ENCODE measurements at regions of chr5 and their contacts with region 1.

Region 1: DNA sequence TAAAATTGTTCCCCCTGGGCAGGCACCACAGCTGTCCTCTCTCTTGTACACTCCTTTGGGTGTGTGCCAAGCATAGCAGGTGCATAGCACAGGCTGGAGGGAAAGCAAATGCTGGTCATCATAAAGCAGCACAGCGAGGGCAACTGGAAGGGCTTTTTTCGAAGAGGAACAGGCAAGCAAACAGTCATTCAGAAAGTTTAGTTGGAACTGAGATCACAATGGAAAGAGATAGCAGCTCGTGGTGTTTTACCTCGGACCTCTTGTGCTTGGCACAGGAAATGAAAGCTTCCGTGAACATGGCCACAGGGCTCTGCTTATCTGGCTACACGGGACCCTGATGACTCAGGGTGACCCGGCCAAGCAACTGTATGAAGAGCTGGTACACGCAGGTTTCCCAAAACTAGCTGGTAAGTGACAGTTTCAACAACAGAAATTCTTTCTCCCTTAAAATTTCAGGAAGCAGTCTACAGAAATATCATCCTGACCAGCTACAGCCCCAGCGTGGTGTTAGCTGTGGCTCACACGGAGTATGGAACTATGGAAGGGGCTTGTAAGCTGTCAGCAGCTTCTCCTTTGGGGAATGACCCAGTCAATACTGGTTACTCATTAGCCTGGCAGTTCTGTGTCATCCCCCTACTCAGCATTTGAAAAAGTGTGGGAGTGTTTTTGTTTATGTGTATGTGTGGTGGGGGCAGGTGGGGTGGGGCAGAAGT is 48.1 kb downstream of the POC5 start:
- DNase-seq: peak; percentile 37
- H3K4me3 Mint-ChIP-seq: peak overlapping the region; percentile 79
- H3K27ac Mint-ChIP-seq: peak overlapping the region; percentile 91
- H3K4me1 Mint-ChIP-seq: peaks cover 36% of the 10 kb centered on the region
- H3K27me3 Mint-ChIP-seq: peaks cover 3% of the 10 kb centered on the region

Region 2: GRCh38 chr5:74945561-74946165 is 723.5 kb before region 1 on chr5:
- intact Hi-C with region 1: loop called (anchors 10 kb)
- DNase-seq: peak; percentile 11
- H3K4me3 Mint-ChIP-seq: no peak overlapping the region
- H3K27ac Mint-ChIP-seq: peak overlapping the region; percentile 20
- H3K4me1 Mint-ChIP-seq: peaks cover 11% of the 10 kb centered on the region
- H3K27me3 Mint-ChIP-seq: peaks cover 33% of the 10 kb centered on the region

Region 3: DNA sequence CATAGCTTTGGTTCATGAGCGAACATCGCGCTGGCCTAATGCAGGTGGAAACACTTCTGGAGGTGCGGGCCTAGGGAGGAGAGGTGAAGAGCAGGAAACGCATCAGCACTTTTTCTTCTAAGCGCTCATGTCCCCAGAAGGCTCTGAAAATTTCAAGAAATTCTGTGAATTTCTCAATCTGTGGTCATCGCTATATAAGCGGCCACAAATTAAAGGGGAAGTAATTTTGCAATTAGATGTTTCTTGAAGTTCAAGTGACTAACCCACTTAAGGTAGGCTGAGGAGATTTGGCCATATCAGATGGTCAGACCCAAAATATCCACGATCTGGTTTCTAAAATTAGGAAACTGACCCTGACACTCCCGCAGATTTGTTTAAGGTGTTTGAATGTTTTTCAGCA is 348.8 kb before region 1 on chr5:
- intact Hi-C with region 1: loop called (anchors 1 kb)
- DNase-seq: no peak
- H3K4me3 Mint-ChIP-seq: no peak overlapping the region
- H3K27ac Mint-ChIP-seq: no peak overlapping the region
- H3K4me1 Mint-ChIP-seq: peaks cover 13% of the 10 kb centered on the region
- H3K27me3 Mint-ChIP-seq: peaks cover 2% of the 10 kb centered on the region

Region 4: DNA sequence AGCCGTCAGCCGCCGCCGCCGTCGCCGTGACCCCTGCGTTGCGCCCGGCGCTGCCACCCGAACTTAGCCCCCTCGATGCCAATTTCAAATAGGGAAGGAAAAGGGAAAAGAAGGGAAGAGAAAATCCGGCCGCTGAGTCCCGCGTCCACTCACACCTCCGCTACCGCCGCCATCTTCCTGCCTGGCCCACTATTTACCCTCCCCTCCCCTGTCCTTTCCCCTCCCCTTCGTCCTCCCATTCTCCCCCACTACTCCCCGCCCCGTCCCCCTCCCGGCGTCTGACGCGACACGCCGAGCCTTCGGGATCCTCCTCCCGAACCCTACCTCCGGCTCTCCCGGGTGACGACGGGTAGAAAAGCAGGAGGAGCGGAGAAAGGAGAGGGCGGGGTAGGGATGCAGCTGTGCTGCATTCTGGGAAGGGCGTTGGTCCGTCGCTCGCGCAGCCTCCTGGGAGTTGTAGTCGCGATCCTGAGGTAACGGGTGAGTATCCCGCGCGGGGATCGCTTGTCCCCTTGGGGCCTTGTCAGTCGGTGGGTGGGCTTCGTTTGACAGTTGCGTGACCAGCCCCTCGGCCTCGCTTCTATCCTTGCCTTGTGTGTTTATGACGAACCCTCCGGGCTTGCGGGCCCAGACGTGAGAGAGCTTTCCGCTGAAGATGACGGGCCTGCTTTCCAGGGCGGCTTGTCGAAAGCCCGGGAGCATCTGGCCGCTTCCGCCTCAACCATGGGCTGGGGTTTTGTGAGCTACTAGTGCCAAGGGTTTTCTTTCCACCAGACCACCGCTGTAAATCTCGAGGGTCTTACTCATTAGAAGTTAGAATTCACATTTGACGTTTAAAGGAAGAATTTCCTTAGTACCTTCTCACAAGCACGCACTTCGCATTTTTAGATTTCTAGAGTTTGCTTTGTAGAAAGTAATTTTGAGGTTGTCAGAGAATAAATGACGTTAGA is 157.4 kb before region 1 on chr5 and contains the starts of genes CERT1 and POLK:
- intact Hi-C with region 1: loop called (anchors 1 kb)
- DNase-seq: peak; percentile 96
- H3K4me3 Mint-ChIP-seq: peak within 1 kb of the TSS; percentile 99
- H3K27ac Mint-ChIP-seq: peak within 1 kb of the TSS; percentile 93
- H3K4me1 Mint-ChIP-seq: peaks cover 62% of the 10 kb centered on the region
- H3K27me3 Mint-ChIP-seq: no peaks in the 10 kb centered on the region
- total RNA-seq, gene CERT1: 41.0 and 43.4 TPM in 2 replicates
- total RNA-seq, gene POLK: 38.0 and 40.4 TPM in 2 replicates

Region 5: DNA sequence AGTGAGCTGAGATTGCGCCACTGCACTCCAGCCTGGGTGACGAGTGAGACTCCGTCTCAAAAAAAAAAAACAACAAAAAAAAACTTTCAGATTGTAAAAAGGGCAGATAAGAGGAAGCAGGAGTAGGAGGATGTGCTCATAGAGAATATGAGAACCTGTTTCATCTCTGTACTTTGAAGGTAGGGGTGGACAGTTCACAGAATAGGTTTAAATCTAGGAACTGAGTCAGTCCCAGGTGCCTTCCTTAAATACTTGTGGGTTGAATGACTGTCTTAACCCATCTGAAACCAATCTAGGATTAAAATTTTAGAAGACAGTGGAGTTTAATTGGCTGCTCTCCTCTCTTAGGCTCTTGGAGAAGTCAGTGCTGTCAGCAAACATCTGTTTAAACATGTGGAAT is 145.1 kb before region 1 on chr5:
- intact Hi-C with region 1: loop called (anchors 1 kb)
- DNase-seq: no peak
- H3K4me3 Mint-ChIP-seq: peak overlapping the region; percentile 49
- H3K27ac Mint-ChIP-seq: peak overlapping the region; percentile 74
- H3K4me1 Mint-ChIP-seq: peaks cover 51% of the 10 kb centered on the region
- H3K27me3 Mint-ChIP-seq: no peaks in the 10 kb centered on the region

Region 6: GRCh38 chr5:75584641-75585040 is 84.5 kb before region 1 on chr5:
- intact Hi-C with region 1: no loop called
- DNase-seq: no peak
- H3K4me3 Mint-ChIP-seq: no peak overlapping the region
- H3K27ac Mint-ChIP-seq: no peak overlapping the region
- H3K4me1 Mint-ChIP-seq: peaks cover 5% of the 10 kb centered on the region
- H3K27me3 Mint-ChIP-seq: no peaks in the 10 kb centered on the region

Region 7: GRCh38 chr5:75681125-75681830 is 12.1 kb after region 1 on chr5:
- intact Hi-C with region 1: loop called (anchors 1 kb)
- DNase-seq: no peak
- H3K4me3 Mint-ChIP-seq: no peak overlapping the region
- H3K27ac Mint-ChIP-seq: no peak overlapping the region
- H3K4me1 Mint-ChIP-seq: peaks cover 11% of the 10 kb centered on the region
- H3K27me3 Mint-ChIP-seq: no peaks in the 10 kb centered on the region

Region 8: DNA sequence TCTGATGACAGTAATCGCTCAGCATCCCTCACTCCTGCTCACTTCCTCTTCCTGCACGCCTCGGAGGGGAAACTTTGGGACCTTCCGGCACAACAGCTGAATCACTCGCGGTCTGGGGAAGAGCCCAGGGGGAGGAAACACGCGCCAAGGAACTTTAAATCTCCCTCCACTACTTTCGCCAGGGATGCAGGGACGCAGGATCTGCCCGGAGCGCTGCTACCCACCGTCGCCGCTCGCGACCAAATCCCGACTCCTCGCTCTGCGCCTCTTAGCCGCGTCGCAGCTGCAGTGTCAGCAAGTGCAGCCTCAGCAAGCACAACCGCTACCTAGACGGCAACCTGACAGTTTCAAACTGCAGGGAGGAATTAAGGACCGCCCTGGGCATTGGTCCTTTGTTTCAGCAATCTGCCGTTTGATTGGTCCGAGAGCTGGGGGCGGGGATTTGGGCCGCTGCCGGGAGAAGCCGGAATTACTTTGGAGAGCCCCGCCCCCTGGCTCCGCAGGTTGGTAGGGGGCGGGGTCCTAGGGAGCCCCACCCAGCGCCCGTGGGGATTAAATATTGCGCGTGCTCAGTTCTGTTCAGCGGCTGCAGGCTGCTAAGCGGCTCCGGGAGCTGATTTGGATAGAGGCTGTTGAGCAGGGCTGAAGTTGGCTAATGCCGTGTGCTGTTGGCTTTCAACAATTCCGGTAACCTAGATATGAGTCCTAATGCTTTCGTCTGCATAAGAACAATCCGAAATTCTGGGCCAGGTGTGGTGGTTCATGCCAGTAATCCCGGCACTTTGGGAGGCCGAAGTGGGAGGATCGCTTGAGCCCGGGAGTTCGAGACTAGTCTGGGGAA is 48.2 kb after region 1 on chr5 and contains the start of gene POC5:
- intact Hi-C with region 1: loop called (anchors 1 kb)
- DNase-seq: peak; percentile 98
- H3K4me3 Mint-ChIP-seq: peak within 1 kb of the TSS; percentile 98
- H3K27ac Mint-ChIP-seq: peak within 1 kb of the TSS; percentile 100
- H3K4me1 Mint-ChIP-seq: peaks cover 34% of the 10 kb centered on the region
- H3K27me3 Mint-ChIP-seq: peaks cover 3% of the 10 kb centered on the region
- total RNA-seq, gene POC5: 20.7 and 24.2 TPM in 2 replicates

Region 9: DNA sequence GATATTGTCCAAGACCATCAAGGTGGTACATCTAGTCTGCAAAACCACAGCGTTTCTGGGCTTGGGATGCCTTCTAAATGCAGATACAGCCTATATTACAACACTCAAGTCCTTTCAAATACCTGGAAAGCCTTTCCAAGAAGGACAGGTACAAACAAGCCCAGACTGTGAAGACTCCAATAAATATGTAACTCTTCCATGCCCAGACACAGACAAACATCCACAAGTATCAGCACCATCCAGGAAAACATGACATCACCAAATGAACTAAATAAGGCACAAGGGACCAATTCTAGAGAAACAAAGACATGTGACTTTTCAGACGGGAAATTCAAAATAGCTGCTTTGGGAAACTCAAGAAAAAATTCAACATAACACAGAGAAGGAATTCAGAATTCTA is 200.8 kb after region 1 on chr5:
- intact Hi-C with region 1: no loop called
- DNase-seq: no peak
- H3K4me3 Mint-ChIP-seq: no peak overlapping the region
- H3K27ac Mint-ChIP-seq: no peak overlapping the region
- H3K4me1 Mint-ChIP-seq: no peaks in the 10 kb centered on the region
- H3K27me3 Mint-ChIP-seq: peaks cover 2% of the 10 kb centered on the region